ENCODE measurements at regions of chr7 and their contacts with region 1.

Region 1: DNA sequence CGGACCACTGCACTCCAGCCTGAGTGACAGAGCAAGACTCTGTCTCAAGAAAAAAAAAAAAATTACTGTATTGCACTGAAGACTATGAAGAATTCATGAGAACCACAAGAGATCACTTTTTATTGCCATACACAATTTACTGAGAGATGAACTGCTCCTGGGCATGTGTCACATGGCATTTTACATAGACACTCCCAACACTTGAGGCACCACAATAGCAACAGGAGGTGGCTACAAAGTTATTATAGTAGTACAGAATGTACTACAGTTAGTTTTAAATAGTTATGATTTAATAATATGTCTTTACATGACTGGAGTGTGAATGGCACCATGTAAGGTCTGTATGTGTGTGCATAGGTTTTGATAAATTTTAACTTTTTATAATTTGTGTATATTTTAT is 70.6 kb downstream of the KMT2E start:
- DNase-seq: no peak
- ATAC-seq: no peak
- H3K4me3 ChIP-seq: no peak overlapping the region
- H3K4me3 Mint-ChIP-seq: no peak overlapping the region
- H3K27ac ChIP-seq: no peak overlapping the region
- H3K27ac Mint-ChIP-seq: no peak overlapping the region
- H3K4me1 ChIP-seq: no peaks in the 10 kb centered on the region
- H3K4me1 Mint-ChIP-seq: no peaks in the 10 kb centered on the region
- H3K27me3 ChIP-seq: no peaks in the 10 kb centered on the region
- H3K27me3 Mint-ChIP-seq: no peaks in the 10 kb centered on the region
- CTCF ChIP-seq: no peak

Region 2: GRCh38 chr7:104679085-104679484 is 405.5 kb before region 1 on chr7:
- CTCF ChIA-PET with region 1: no interaction called
- POLR2A ChIA-PET with region 1: no interaction called
- intact Hi-C with region 1: no loop called
- DNase-seq: no peak
- ATAC-seq: no peak
- H3K4me3 ChIP-seq: no peak overlapping the region
- H3K4me3 Mint-ChIP-seq: no peak overlapping the region
- H3K27ac ChIP-seq: no peak overlapping the region
- H3K27ac Mint-ChIP-seq: no peak overlapping the region
- H3K4me1 ChIP-seq: no peaks in the 10 kb centered on the region
- H3K4me1 Mint-ChIP-seq: no peaks in the 10 kb centered on the region
- H3K27me3 ChIP-seq: peaks cover 0 to 3% (median 0%) of the 10 kb centered on the region in 4 experiments
- H3K27me3 Mint-ChIP-seq: no peaks in the 10 kb centered on the region
- CTCF ChIP-seq: no peak

Region 3: DNA sequence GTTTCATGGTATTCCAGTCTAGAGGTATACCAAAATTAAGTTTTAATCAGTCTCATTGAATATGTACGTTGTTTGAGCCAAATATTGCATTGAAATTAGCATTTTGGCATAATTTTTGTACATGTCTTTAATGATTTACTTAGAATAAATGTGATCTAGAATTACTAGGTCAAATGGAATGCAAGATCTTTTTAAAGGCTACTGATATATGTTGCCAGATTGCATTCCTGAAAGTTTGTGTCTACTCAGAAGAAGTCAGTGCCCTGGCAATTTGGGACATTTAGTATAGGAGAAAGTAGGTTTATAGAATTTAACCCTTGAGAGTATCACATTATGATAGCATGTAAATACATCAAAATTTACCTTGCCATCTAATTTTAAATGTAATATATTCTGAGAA is 38.2 kb before region 1 on chr7:
- CTCF ChIA-PET with region 1: no interaction called
- POLR2A ChIA-PET with region 1: no interaction called
- intact Hi-C with region 1: loop called (anchors 5 kb)
- DNase-seq: no peak
- ATAC-seq: no peak
- H3K4me3 ChIP-seq: no peak overlapping the region
- H3K4me3 Mint-ChIP-seq: no peak overlapping the region
- H3K27ac ChIP-seq: no peak overlapping the region
- H3K27ac Mint-ChIP-seq: no peak overlapping the region
- H3K4me1 ChIP-seq: peaks cover 5 to 6% of the 10 kb centered on the region in 2 donors
- H3K4me1 Mint-ChIP-seq: peaks cover 26% of the 10 kb centered on the region
- H3K27me3 ChIP-seq: no peaks in the 10 kb centered on the region
- H3K27me3 Mint-ChIP-seq: no peaks in the 10 kb centered on the region
- CTCF ChIP-seq: no peak

Region 4: DNA sequence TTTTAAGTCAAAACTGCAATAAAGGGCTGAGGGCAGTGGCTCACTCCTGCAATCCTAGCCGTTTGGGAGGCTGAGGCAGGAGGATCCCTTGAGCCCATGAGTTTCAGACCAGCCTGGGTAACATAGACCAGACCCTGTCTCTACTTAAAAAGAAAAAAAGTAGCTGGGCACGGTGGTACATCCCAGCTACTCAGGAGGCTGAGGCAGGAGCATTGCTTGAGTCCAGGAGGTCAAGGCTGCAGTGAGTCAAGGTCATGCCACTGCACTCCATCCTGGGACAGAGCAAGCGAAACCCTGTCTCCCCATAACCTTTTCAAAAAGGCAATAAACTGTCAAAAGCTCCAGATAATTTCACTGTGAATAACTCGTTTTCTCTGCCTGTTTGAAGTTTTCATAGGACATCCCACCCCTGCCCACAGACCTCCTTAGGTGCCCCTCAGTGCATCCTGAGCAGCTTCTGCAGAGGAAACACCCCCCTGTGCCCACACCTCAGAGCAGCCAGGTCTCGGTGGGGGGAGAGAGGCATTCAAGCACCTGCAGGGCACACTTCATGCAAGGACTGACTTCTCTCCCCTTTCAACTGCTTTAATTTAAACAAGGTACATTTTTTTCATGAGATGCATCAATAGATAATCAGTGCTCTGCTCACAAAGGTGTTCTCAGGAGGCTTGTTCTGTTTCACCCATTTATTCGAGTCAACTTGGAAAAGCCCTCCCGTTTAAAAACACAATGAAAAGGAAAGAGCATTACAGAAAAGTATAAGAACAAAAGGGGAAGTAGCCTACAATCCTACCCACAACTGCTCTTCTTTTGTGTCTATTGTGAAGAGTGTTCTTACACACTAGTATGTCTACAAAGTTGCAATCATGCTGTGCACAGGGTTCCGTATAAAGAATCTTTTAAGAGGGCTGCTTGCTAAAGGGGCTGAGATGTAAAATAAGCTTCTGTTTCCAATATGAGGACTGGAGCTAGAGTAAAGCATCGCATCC is 34.3 kb after region 1 on chr7:
- CTCF ChIA-PET with region 1: no interaction called
- POLR2A ChIA-PET with region 1: no interaction called
- intact Hi-C with region 1: loop called (anchors 5 kb)
- DNase-seq: peak; percentile 28
- ATAC-seq: no peak
- H3K4me3 ChIP-seq: no peak overlapping the region
- H3K4me3 Mint-ChIP-seq: no peak overlapping the region
- H3K27ac ChIP-seq: peak overlapping the region; percentile 8 to 47
- H3K27ac Mint-ChIP-seq: peak overlapping the region; percentile 59
- H3K4me1 ChIP-seq: peaks cover 10 to 12% of the 10 kb centered on the region in 2 donors
- H3K4me1 Mint-ChIP-seq: peaks cover 14% of the 10 kb centered on the region
- H3K27me3 ChIP-seq: no peaks in the 10 kb centered on the region
- H3K27me3 Mint-ChIP-seq: no peaks in the 10 kb centered on the region
- CTCF ChIP-seq: no peak

Region 5: GRCh38 chr7:105141068-105141467 is 56.5 kb after region 1 on chr7:
- CTCF ChIA-PET with region 1: no interaction called
- POLR2A ChIA-PET with region 1: no interaction called
- intact Hi-C with region 1: no loop called
- DNase-seq: peak; percentile 27
- ATAC-seq: no peak
- H3K4me3 ChIP-seq: no peak overlapping the region
- H3K4me3 Mint-ChIP-seq: no peak overlapping the region
- H3K27ac ChIP-seq: no peak overlapping the region
- H3K27ac Mint-ChIP-seq: no peak overlapping the region
- H3K4me1 ChIP-seq: no peaks in the 10 kb centered on the region
- H3K4me1 Mint-ChIP-seq: no peaks in the 10 kb centered on the region
- H3K27me3 ChIP-seq: no peaks in the 10 kb centered on the region
- H3K27me3 Mint-ChIP-seq: no peaks in the 10 kb centered on the region
- CTCF ChIP-seq: no peak

Measured in B cell (primary cell).